T-cell (primary cell): ENCODE measurements at regions of chr5 and their contacts with region 1.

Region 1: GRCh38 chr5:153964880-153965645 is 73.6 kb downstream of the FAM114A2 start:
- DNase-seq: peak in 20 of 35 experiments; percentile 7 to 61 (median 20)
- ATAC-seq: peak in 2 of 4 experiments; percentile 32 to 42
- H3K4me3 ChIP-seq: no peak overlapping the region
- H3K4me3 Mint-ChIP-seq: no peak overlapping the region
- H3K27ac ChIP-seq: no peak overlapping the region
- H3K27ac Mint-ChIP-seq: no peak overlapping the region
- H3K4me1 ChIP-seq: peaks cover 0 to 14% of the 10 kb centered on the region in 2 experiments
- H3K4me1 Mint-ChIP-seq: peaks cover 9 to 11% (median 10%) of the 10 kb centered on the region in 3 donors
- H3K27me3 ChIP-seq: peaks cover 0 to 13% of the 10 kb centered on the region in 2 experiments
- H3K27me3 Mint-ChIP-seq: peaks cover 9 to 10% of the 10 kb centered on the region in 2 donors

Region 2: DNA sequence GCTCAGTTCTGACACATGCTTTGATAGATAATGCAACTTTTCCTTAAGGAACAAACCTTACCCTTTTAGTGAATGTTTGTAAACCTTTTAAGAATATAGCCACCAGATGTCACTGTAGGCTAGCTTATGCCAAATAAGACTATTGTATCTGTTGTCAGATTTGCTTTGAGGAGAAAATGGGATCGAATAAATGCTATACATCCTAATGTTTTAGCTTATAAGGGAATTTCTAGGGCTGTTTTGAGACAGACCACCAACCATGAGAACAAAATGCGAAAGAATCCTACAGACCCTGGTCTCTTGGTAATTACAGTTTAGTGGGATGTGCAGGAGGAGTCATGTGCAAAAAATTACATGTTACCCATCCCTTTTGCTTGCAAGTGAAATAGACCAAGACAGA is 1432.3 kb before region 1 on chr5:
- CTCF ChIA-PET with region 1: interaction called, 7 to 10 read pairs
- POLR2A ChIA-PET with region 1: interaction called in 1 of 2 experiments, 4 read pairs
- DNase-seq: peak in 1 of 35 experiments; percentile 47
- ATAC-seq: no peak
- H3K4me3 ChIP-seq: no peak overlapping the region
- H3K4me3 Mint-ChIP-seq: no peak overlapping the region
- H3K27ac ChIP-seq: no peak overlapping the region
- H3K27ac Mint-ChIP-seq: no peak overlapping the region
- H3K4me1 ChIP-seq: peaks cover 0 to 5% of the 10 kb centered on the region in 2 experiments
- H3K4me1 Mint-ChIP-seq: peaks cover 4 to 10% (median 9%) of the 10 kb centered on the region in 3 donors
- H3K27me3 ChIP-seq: no peaks in the 10 kb centered on the region
- H3K27me3 Mint-ChIP-seq: peaks cover 0 to 4% of the 10 kb centered on the region in 2 donors

Region 3: GRCh38 chr5:152560512-152561137 is 1404.4 kb before region 1 on chr5:
- CTCF ChIA-PET with region 1: interaction called in 1 of 2 experiments, 14 read pairs
- POLR2A ChIA-PET with region 1: no interaction called
- DNase-seq: peak in 17 of 35 experiments; percentile 1 to 44 (median 9)
- ATAC-seq: no peak
- H3K4me3 ChIP-seq: no peak overlapping the region
- H3K4me3 Mint-ChIP-seq: no peak overlapping the region
- H3K27ac ChIP-seq: no peak overlapping the region
- H3K27ac Mint-ChIP-seq: no peak overlapping the region
- H3K4me1 ChIP-seq: no peaks in the 10 kb centered on the region
- H3K4me1 Mint-ChIP-seq: no peaks in the 10 kb centered on the region
- H3K27me3 ChIP-seq: no peaks in the 10 kb centered on the region
- H3K27me3 Mint-ChIP-seq: no peaks in the 10 kb centered on the region

Region 4: GRCh38 chr5:153613144-153613543 is 351.9 kb before region 1 on chr5:
- CTCF ChIA-PET with region 1: no interaction called
- POLR2A ChIA-PET with region 1: no interaction called
- DNase-seq: no peak
- ATAC-seq: no peak
- H3K4me3 ChIP-seq: no peak overlapping the region
- H3K4me3 Mint-ChIP-seq: no peak overlapping the region
- H3K27ac ChIP-seq: no peak overlapping the region
- H3K27ac Mint-ChIP-seq: no peak overlapping the region
- H3K4me1 ChIP-seq: no peaks in the 10 kb centered on the region
- H3K4me1 Mint-ChIP-seq: no peaks in the 10 kb centered on the region
- H3K27me3 ChIP-seq: no peaks in the 10 kb centered on the region
- H3K27me3 Mint-ChIP-seq: peaks cover 0 to 4% of the 10 kb centered on the region in 2 donors